ENCODE measurements at regions of chr16 and their contacts with region 1.

Region 1: DNA sequence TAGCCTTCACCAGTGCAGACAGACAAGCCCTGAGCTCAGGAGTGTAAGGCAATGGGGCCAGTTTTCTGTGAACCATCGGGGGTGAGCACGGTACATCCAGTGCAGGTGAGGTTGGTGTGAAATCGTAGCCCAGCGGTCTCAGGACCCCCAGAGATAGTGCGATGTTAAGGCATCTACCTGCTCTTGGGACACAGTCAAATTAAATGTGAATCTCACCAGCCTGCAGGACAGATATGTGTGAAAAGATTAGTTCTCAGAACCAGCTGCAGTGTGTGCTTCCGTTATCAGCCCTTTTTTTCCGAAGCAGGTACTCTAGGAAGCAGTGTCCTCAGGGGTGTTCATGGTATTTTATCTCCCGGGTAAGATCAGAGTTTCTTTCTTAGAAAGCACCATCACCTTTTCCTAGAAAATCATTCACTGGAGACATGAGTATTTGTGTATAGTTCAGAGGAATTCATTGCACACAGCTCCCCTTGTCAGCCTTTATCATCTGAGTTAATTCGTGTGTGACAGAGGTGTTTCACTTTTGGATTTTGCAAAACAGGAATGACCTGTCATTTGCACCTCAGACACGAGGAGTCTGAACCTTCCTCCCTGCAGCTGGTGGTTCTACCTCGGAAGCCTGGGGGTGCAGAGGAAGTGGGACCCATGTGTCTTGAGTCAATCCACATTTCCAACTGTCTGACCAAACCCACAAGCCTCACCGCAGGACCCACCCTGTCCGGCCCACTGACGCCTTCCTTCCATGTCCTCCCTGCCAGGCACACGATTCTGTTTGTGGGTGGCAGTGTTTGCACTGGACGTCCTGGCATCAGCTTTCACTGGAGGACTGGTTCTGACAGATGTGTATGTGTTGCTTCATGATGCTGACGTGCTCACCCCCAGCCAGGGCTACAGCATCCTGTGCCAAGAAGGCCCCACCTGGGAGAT is 107.8 kb downstream of the CLEC16A start:
- DNase-seq: peak; percentile 85
- ATAC-seq: peak; percentile 89
- H3K4me3 Mint-ChIP-seq: peak overlapping the region; percentile 7
- H3K27ac Mint-ChIP-seq: peak overlapping the region; percentile 75
- H3K4me1 Mint-ChIP-seq: peaks cover 61% of the 10 kb centered on the region
- H3K27me3 Mint-ChIP-seq: no peaks in the 10 kb centered on the region

Region 2: DNA sequence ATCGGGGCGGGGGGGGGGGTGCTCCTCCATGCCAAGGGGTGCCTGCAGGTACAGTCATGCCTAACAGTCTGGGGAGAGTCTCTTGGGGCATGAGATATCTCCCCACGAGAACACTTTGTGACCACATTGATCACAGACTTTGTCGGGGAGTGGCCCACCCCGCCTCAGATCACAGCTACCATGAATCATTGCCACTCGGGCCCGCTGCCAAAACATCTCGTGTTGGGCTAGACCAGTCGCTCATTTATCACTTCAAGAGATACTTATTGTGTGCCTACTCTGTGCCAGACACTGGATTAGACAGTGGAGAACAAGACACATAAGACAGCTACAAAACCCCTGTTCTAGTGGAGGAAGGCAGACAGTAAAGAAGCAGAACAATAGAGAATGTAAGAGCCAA is 35.2 kb before region 1 on chr16:
- CTCF ChIA-PET with region 1: interaction called, 3 read pairs
- POLR2A ChIA-PET with region 1: no interaction called
- intact Hi-C with region 1: loop called in 1 of 2 experiments (anchors 5 kb)
- DNase-seq: peak; percentile 74
- ATAC-seq: peak; percentile 76
- H3K4me3 Mint-ChIP-seq: no peak overlapping the region
- H3K27ac Mint-ChIP-seq: peak overlapping the region; percentile 64
- H3K4me1 Mint-ChIP-seq: peaks cover 13% of the 10 kb centered on the region
- H3K27me3 Mint-ChIP-seq: no peaks in the 10 kb centered on the region

Region 3: DNA sequence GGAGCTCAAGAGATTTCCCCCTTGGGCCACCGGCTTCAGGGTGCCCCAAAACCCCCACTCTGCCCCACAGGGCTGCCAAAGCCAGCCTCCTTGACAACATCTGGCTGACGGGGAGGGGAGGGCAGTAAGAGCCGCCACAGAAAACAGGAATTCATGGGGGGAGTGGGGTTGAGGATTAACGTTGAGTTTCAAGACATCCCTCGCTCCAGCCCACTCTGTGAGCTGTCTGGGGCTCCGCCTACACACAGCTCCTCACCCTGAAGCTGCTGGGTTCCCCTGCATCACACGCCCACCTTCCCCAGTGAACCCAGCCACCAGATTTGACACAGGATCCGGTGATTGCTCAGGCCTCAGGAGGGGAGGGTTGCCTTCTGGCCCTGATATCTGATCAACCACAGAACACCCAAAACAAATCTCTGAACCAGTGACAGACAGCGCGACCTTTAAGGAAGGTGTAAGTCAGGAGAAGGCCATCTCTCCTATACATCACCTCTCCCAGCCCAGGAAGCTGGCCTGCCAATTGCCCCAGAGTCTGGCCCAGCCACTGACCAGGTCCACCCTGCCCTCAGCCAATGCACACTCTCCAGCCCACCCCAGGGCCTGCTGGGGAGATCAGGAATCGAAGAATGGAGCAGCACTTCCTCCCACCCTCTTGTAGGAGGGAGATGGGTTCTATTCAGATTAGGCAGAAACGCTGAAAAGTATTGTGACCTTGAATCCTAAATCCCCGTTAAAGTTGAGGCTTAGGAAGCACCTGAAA is 24.3 kb after region 1 on chr16:
- CTCF ChIA-PET with region 1: interaction called, 6 read pairs
- POLR2A ChIA-PET with region 1: interaction called, 4 read pairs
- intact Hi-C with region 1: loop called (anchors 1 to 2 kb)
- DNase-seq: peak; percentile 87
- ATAC-seq: peak; percentile 69
- H3K4me3 Mint-ChIP-seq: peak overlapping the region; percentile 15
- H3K27ac Mint-ChIP-seq: peak overlapping the region; percentile 89
- H3K4me1 Mint-ChIP-seq: peaks cover 96% of the 10 kb centered on the region
- H3K27me3 Mint-ChIP-seq: no peaks in the 10 kb centered on the region

Region 4: DNA sequence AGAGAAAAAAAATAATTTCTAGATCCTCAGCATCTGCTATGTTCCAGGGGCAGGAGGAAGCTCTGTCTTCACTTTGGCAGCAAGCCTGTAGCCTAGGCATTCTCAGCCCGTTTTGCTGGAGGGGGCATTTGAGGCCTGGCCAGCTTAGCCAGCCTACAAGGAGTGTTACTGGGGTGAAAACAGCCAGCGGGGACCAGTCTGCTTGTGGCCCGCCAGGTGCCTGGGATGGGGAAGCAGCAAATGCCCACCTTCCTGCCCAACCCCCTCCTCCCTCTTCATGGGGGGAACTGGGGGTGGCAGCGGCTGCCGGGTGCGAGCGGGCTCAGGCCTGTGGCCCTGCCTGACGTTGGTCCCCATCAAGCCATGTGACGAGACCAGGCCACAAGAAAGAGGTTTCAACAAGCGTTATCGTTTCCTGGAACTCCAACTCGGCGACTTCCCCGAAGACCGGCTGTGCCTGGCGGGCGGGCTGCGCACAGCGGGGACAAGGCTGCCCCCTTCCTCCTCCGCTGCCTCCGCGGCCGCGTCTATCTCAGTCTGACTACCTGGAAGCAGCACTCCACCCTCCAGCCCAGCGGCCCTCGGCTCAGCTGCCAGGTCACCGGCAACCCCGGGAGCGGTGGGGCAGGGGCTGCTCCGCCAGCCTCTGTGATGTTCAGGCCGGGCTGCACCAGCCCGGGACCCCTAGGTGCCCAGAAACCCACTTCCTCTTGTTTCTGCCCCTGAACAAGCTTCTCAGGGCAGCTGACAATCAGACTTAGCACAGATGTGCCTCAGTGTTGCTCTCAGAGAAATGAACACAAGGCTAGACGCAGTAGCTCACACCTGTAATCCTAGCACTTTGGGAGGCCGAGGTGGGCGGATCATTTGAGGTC is 180.9 kb after region 1 on chr16:
- CTCF ChIA-PET with region 1: no interaction called
- POLR2A ChIA-PET with region 1: no interaction called
- intact Hi-C with region 1: loop called in 1 of 2 experiments (anchors 1 kb)
- DNase-seq: peak; percentile 96
- ATAC-seq: peak; percentile 82
- H3K4me3 Mint-ChIP-seq: peak overlapping the region; percentile 60
- H3K27ac Mint-ChIP-seq: peak overlapping the region; percentile 97
- H3K4me1 Mint-ChIP-seq: peaks cover 80% of the 10 kb centered on the region
- H3K27me3 Mint-ChIP-seq: no peaks in the 10 kb centered on the region

Measured in activated CD4-positive, alpha-beta T cell treated with anti-CD3 and anti-CD28 coated beads for 36 hours (primary cell).